ENCODE measurements at regions of chr19 and their contacts with region 1.

Region 1: DNA sequence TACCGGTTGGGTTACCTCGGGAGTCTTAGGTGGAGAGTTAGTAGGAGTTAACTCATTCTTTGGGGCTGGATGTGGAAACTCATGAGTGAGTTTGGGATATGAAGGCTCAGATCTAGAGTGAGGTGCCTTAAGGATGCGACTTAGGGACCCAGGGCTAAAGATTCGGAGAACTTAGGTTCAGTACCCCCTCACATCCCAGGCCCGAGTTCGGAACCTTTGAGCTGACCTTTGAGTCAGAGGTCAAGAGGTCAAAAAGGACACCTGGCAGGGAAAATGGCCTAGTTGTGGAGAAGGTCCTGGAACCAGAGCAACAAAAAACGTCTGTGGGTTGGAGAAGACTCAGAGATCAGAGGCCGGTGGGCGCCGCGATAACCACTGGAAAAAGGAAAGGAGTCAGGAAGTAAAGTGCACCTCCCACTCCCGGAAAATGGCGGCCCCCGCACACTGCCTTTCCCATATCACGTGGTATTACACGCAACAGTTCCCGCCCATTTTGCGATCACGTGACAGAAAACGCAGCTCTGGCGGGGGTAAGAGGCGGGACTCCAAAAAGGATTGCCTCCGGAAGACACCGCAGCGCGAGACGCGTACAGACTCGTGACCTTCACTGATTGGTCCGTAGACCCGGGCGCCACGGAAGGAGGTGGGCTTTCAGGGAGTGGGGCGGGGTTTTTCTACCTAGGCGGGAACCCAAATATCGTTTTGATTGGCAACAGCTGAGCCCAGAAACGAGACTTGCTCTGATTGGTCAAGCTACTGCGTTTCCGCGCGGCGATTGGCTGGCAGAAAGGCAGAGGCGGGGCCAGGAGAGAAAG is at the start of gene ACTMAP:
- DNase-seq: peak; percentile 100
- H3K4me3 Mint-ChIP-seq: peak within 1 kb of the TSS; percentile 96
- H3K27ac Mint-ChIP-seq: peak within 1 kb of the TSS; percentile 97
- H3K4me1 Mint-ChIP-seq: peaks cover 29% of the 10 kb centered on the region
- H3K27me3 Mint-ChIP-seq: no peaks in the 10 kb centered on the region
- total RNA-seq, gene ACTMAP: 13.2 and 14.2 TPM in 2 replicates

Region 2: GRCh38 chr19:40662921-40663694 is 87.2 kb before region 1 on chr19:
- intact Hi-C with region 1: loop called (anchors 1 kb)
- DNase-seq: peak; percentile 85
- H3K4me3 Mint-ChIP-seq: peak overlapping the region; percentile 83
- H3K27ac Mint-ChIP-seq: peak overlapping the region; percentile 80
- H3K4me1 Mint-ChIP-seq: peaks cover 17% of the 10 kb centered on the region
- H3K27me3 Mint-ChIP-seq: no peaks in the 10 kb centered on the region

Region 3: DNA sequence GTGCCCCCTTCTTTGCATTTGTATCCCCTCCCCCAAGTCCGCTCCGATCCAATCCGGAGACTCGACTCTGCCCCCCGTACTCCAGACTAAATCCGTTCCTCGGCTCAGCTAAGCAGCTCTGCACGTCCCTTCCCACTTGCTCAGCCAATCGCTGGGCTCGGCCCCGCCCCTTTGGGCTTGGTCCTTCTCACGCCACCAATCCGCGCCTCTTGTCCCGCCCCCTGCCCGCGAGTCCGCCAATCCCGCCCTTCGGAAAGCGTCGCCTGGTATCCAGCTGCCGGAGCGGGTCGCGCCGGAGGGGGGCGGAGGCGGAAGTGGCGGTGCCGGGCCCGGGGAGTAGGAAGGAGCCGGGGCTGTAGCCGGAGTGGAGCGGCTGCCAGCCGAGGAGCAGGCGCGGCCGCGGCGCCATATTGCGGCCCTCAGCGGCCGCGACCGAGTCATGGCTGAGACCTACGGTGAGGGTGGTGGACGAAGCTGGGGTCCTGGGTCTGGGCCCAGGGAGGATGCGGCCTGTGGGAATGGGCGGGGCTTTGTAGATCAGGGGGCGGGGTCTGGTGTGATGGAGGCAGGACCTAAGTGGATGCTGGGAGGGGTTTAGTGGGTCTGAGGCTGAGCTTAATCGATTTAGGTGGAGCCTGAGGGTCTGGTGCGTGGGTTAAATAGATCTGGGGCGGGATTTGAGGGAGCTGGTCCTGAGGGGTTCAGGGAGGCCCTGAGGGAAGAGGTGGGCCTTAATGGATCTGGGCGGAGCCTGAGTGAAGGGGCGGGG is 27.9 kb after region 1 on chr19 and contains the start of gene RAB4B:
- intact Hi-C with region 1: loop called (anchors 1 kb)
- DNase-seq: peak; percentile 100
- H3K4me3 Mint-ChIP-seq: peak within 1 kb of the TSS; percentile 96
- H3K27ac Mint-ChIP-seq: peak within 1 kb of the TSS; percentile 96
- H3K4me1 Mint-ChIP-seq: peaks cover 35% of the 10 kb centered on the region
- H3K27me3 Mint-ChIP-seq: no peaks in the 10 kb centered on the region
- total RNA-seq, gene RAB4B: 50.1 and 50.4 TPM in 2 replicates

Region 4: GRCh38 chr19:40798223-40798996 is 48.1 kb after region 1 on chr19:
- intact Hi-C with region 1: loop called (anchors 1 kb)
- DNase-seq: peak; percentile 100
- H3K4me3 Mint-ChIP-seq: peak overlapping the region; percentile 88
- H3K27ac Mint-ChIP-seq: peak overlapping the region; percentile 94
- H3K4me1 Mint-ChIP-seq: peaks cover 42% of the 10 kb centered on the region
- H3K27me3 Mint-ChIP-seq: no peaks in the 10 kb centered on the region

Region 5: DNA sequence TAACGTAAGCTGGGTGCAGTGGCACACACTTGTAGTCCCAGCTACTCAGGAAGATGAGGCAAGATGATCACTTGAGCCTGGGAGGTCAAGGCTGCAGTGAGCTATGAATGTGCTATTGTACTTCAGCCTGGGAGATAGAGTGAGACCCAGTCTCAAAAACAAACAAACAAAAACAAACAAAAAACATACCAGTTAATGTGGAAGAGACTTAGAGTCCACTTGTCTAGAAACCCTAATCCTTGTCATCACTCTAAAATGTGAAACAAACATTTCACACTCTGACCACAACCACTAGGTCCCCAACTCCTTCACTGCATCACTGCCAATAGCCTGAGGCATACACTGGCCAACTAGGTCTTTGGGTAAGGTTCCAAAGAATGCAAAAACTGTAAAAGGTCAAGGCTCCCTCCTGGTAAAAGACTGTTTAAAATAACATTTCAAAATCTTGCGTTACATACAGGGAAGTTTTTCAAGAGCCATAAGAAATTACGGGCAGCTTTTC is 212.2 kb after region 1 on chr19:
- intact Hi-C with region 1: no loop called
- DNase-seq: no peak
- H3K4me3 Mint-ChIP-seq: no peak overlapping the region
- H3K27ac Mint-ChIP-seq: no peak overlapping the region
- H3K4me1 Mint-ChIP-seq: no peaks in the 10 kb centered on the region
- H3K27me3 Mint-ChIP-seq: peaks cover 22% of the 10 kb centered on the region

Measured in activated T-helper 2 cell treated with anti-CD3 and anti-CD28 coated beads, Interferon-gamma antibody, Interleukin-2, Interleukin-4, amounts not matched to agents 10 μg/mL and 5 μg/mL and 100 μg/mL, durations not matched to agents 14 hours and 24 hours and 36 hours (primary cell).